MCF 10A (cell line): ENCODE measurements at regions of chr18 and their contacts with region 1.

Region 1: GRCh38 chr18:24488824-24489493 is 28.5 kb downstream of the HRH4 start:
- DNase-seq: peak; percentile 52
- H3K4me3 Mint-ChIP-seq: no peak overlapping the region
- H3K27ac Mint-ChIP-seq: no peak overlapping the region
- H3K4me1 Mint-ChIP-seq: peaks cover 9% of the 10 kb centered on the region
- H3K27me3 Mint-ChIP-seq: no peaks in the 10 kb centered on the region
- CTCF ChIP-seq: peak; percentile 59

Region 2: DNA sequence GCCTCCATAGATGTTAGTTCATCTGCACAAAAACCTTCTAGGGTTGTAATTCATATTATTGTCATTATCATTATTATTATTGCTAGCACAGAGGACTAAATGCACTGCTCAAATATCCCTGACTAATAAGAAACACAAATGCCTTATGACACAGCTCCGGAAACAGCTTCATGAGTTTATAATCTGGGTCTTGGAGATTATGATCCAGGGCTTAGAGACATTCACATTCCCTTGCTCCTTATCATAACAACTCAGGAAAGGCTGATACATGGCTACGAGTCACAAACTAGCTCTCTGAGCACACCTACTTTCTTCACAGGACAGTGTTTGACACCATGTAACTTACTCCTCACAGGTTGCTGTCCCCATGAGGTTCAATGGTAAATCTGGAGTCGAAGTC is 576.6 kb before region 1 on chr18:
- CTCF ChIA-PET with region 1: no interaction called
- POLR2A ChIA-PET with region 1: no interaction called
- intact Hi-C with region 1: no loop called
- DNase-seq: no peak
- H3K4me3 Mint-ChIP-seq: no peak overlapping the region
- H3K27ac Mint-ChIP-seq: no peak overlapping the region
- H3K4me1 Mint-ChIP-seq: no peaks in the 10 kb centered on the region
- H3K27me3 Mint-ChIP-seq: no peaks in the 10 kb centered on the region
- CTCF ChIP-seq: no peak

Region 3: DNA sequence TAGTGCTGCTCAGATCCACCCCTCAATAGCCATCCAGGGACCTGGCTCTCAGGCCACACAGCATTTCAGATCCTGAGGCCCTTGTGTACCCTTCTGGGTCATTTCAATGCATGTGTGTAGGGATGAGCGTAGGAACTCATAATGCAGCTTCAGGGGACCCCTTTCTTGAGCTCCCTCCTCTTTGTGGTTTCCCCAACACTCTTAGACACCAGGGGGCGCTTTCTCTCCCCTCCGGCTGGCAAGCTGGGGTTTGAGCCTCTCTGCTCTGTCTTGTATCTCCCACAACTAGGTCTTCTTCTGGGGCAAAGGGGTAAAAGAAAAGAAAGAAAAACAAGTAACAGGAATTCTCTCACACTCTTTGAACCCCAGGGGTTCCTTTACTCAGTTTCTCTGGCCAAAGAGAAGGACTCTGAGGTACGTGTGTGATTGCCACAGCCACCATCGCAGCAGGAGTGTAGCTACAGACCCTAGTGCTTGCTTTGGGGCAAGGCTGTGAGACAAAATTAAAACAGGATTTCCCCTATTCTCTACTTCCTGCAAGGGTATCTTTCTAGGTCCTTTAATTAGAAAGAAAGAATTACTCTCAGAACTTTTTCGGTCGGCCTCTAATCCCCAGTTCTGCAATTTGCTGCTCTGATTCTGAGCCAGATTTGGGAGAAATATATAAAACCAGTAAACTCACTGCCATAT is 312.1 kb before region 1 on chr18:
- CTCF ChIA-PET with region 1: interaction called, 15 read pairs
- POLR2A ChIA-PET with region 1: no interaction called
- intact Hi-C with region 1: no loop called
- DNase-seq: peak; percentile 65
- H3K4me3 Mint-ChIP-seq: no peak overlapping the region
- H3K27ac Mint-ChIP-seq: no peak overlapping the region
- H3K4me1 Mint-ChIP-seq: peaks cover 4% of the 10 kb centered on the region
- H3K27me3 Mint-ChIP-seq: no peaks in the 10 kb centered on the region
- CTCF ChIP-seq: peak; percentile 82

Region 4: GRCh38 chr18:24368749-24369148 is 120.2 kb before region 1 on chr18:
- CTCF ChIA-PET with region 1: interaction called, 285 read pairs
- POLR2A ChIA-PET with region 1: no interaction called
- intact Hi-C with region 1: no loop called
- DNase-seq: no peak
- H3K4me3 Mint-ChIP-seq: no peak overlapping the region
- H3K27ac Mint-ChIP-seq: no peak overlapping the region
- H3K4me1 Mint-ChIP-seq: peaks cover 6% of the 10 kb centered on the region
- H3K27me3 Mint-ChIP-seq: no peaks in the 10 kb centered on the region
- CTCF ChIP-seq: no peak

Region 5: GRCh38 chr18:24462838-24463775 is 25.9 kb before region 1 on chr18:
- CTCF ChIA-PET with region 1: interaction called, 18 read pairs
- POLR2A ChIA-PET with region 1: no interaction called
- intact Hi-C with region 1: no loop called
- DNase-seq: no peak
- H3K4me3 Mint-ChIP-seq: no peak overlapping the region
- H3K27ac Mint-ChIP-seq: no peak overlapping the region
- H3K4me1 Mint-ChIP-seq: no peaks in the 10 kb centered on the region
- H3K27me3 Mint-ChIP-seq: no peaks in the 10 kb centered on the region
- CTCF ChIP-seq: no peak

Region 6: DNA sequence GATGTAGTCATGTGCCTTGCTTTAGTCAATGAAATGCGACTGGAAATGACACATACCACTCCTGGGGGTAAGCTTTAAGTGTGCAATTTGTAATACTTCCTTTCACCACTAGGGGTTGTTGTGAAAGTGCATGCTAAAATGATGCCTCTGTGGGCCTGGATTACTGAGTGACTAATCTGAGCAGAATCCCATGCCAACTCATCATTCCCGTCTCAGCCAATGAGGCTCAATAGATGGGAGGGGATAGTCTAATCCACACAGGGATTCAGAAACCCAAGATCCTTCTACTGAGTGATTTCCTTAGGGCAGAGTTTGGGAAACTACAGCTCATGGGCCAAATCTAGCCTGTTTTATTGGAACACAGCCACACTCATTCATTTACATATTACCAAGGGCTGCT is 25.5 kb after region 1 on chr18:
- CTCF ChIA-PET with region 1: interaction called, 11 read pairs
- POLR2A ChIA-PET with region 1: no interaction called
- intact Hi-C with region 1: no loop called
- DNase-seq: peak; percentile 65
- H3K4me3 Mint-ChIP-seq: no peak overlapping the region
- H3K27ac Mint-ChIP-seq: no peak overlapping the region
- H3K4me1 Mint-ChIP-seq: no peaks in the 10 kb centered on the region
- H3K27me3 Mint-ChIP-seq: no peaks in the 10 kb centered on the region
- CTCF ChIP-seq: peak; percentile 37

Region 7: GRCh38 chr18:24726727-24727492 is 238.0 kb after region 1 on chr18:
- CTCF ChIA-PET with region 1: interaction called, 23 read pairs
- POLR2A ChIA-PET with region 1: no interaction called
- intact Hi-C with region 1: loop called (anchors 1 kb)
- DNase-seq: peak; percentile 76
- H3K4me3 Mint-ChIP-seq: no peak overlapping the region
- H3K27ac Mint-ChIP-seq: no peak overlapping the region
- H3K4me1 Mint-ChIP-seq: no peaks in the 10 kb centered on the region
- H3K27me3 Mint-ChIP-seq: peaks cover 46% of the 10 kb centered on the region
- CTCF ChIP-seq: peak; percentile 75